GM10248 (cell line): ENCODE measurements at regions of chr3 and their contacts with region 1.

Region 1: DNA sequence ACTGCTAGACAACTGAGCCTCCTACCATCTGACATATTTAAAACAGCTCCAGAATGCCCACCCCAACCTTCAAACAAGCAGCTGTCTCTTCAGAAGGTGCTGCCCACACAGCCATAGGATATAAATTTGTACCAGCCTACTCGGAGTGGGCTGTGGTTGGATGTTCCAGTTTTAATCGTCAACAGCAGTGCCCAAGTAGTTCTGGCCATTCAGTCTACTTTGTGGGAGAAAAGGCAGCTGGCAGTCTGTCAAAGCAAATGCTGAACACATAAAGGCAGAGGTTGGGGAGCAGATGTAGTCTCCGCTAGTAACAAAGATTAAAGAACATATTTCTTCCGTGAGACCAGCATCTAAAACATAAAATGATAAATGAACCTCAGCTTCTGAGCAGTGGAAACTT is 15.9 kb upstream of the ERC2 start:
- DNase-seq: no peak
- CTCF ChIP-seq: no peak

Region 2: DNA sequence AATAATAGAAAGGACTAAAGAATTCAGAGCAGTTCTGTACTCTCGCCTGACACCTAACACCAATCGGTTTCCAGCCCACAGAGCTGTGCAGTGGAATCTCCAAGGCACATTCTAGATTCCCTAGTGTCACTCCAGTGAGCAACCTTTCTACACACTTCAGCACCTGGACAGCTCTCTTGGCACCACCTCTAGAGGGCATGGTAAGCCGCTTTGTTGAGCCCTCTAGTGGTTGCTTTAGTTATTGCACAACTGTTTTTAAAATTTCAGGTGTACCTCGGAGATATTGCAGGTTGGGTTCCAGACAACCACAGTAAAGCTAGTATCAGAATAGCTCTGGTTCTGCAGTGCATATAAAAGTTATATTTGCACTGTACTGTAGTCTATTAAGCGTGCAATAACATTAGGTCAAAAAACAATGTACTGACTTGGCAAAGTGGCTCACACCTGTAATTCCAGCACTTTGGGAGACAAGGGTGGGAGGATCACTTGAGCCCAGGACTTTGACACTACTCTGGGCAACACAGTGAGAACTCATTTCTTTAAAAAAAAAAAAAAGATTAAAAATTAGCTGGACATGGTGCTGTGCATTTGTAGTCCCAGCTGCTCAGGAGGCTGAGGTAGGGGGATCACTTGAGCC is 10.7 kb after region 1 on chr3:
- CTCF ChIA-PET with region 1: interaction called, 22 read pairs
- POLR2A ChIA-PET with region 1: no interaction called
- DNase-seq: peak; percentile 81
- CTCF ChIP-seq: peak; percentile 98